Activated CD8-positive, alpha-beta T cell treated with anti-CD3 and anti-CD28 coated beads for 36 hours (primary cell): ENCODE measurements at regions of chr16 and their contacts with region 1.

Region 1: DNA sequence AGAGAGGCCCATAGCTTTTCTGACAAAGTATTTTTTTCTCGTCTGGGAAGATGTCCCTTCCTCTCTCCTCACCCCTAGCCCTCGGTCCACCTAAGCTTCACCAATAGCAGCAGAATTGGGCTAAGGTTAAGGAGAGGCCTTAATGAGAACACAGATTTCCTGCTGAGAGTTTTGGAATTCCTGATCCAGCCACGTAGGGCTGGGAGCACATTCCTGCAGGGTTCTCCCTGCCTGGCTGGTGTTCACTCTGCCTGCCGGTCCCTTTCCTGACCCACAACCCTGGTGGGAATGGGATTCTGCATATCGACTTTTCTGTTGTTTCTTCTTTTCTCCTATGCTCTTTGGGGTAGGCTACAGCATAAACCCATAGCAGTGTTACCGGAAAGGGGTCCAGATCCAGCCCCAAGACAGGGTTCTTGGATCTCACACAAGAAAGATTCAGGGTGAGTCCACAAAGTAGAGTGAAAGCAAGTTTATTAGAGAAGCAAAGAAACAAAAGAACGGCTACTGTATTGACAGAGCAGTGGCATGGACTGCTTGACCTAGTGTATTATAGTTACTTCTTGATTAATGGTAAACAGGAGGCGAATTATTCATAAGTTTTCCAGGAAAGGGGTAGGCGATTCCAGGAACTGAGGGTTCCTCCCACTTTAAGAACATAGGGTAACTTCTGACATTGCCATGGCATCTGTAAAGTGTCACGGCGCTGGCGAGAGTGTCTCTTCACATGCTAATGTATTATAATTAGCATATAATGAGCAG is 92.9 kb downstream of the CACNG3 start:
- DNase-seq: no peak
- ATAC-seq: no peak
- H3K4me3 Mint-ChIP-seq: no peak overlapping the region
- H3K27ac Mint-ChIP-seq: no peak overlapping the region
- H3K4me1 Mint-ChIP-seq: peaks cover 6% of the 10 kb centered on the region
- H3K27me3 Mint-ChIP-seq: peaks cover 12% of the 10 kb centered on the region
- CTCF ChIP-seq: no peak

Region 2: GRCh38 chr16:24273473-24274182 is 75.5 kb before region 1 on chr16:
- CTCF ChIA-PET with region 1: no interaction called
- POLR2A ChIA-PET with region 1: no interaction called
- intact Hi-C with region 1: no loop called
- DNase-seq: no peak
- ATAC-seq: no peak
- H3K4me3 Mint-ChIP-seq: no peak overlapping the region
- H3K27ac Mint-ChIP-seq: no peak overlapping the region
- H3K4me1 Mint-ChIP-seq: no peaks in the 10 kb centered on the region
- H3K27me3 Mint-ChIP-seq: peaks cover 24% of the 10 kb centered on the region
- CTCF ChIP-seq: no peak

Region 3: DNA sequence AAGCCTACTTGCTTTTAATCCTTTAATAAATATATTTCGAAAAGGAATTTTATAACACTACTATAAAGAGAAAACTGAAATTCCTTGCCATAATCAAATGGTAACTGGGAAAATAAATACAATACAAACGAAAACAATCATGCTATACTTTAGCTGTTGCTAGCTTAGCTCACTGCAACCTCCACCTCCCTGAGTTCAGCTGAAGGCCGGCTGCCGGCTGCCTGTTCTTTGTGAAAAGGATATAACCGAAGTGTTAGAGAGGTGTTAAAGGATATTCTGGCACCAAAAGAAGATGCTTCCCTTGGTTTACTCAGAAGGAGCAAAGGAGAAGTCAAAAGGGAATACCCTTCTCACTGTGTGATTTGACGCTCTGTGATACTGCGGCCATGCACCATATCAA is 15.5 kb after region 1 on chr16:
- CTCF ChIA-PET with region 1: no interaction called
- POLR2A ChIA-PET with region 1: no interaction called
- intact Hi-C with region 1: loop called (anchors 1 kb)
- DNase-seq: no peak
- ATAC-seq: no peak
- H3K4me3 Mint-ChIP-seq: no peak overlapping the region
- H3K27ac Mint-ChIP-seq: no peak overlapping the region
- H3K4me1 Mint-ChIP-seq: no peaks in the 10 kb centered on the region
- H3K27me3 Mint-ChIP-seq: peaks cover 26% of the 10 kb centered on the region
- CTCF ChIP-seq: no peak